ENCODE measurements at regions of chr17 and their contacts with region 1.

Region 1: DNA sequence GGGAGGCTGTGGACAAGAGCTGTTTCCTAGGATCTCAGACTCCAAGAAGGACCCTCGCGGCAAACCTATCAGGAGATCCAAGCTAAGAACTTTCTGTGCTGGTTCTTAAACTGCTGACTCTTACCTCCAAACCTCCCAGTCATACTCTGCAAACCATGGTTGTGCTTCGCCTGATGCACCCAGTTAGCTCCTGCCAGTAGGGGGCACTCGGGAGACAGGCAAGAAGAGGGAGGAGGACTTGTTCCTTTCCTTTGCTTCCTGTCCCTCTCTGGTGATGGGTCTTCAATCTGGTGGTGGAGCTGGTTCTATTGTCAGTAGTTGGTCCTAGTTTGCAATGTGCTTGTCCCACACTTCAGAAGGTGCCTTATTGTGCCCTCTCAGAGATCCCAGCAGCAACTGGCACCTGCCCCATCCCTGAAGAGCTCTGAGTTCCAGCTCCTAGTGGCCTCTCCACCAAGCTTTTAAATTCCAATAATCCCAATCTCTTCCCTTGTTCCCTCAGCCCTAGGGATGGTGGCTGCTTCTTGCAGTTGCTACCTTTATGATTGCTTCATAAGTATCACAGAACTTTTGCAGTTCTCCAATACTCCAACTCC is 113.5 kb upstream of the RPL38 start:
- DNase-seq: peak; percentile 61 to 93
- H3K4me3 ChIP-seq: no peak overlapping the region
- H3K27ac ChIP-seq: no peak overlapping the region
- H3K4me1 ChIP-seq: no peaks in the 10 kb centered on the region
- H3K27me3 ChIP-seq: no peaks in the 10 kb centered on the region
- CTCF ChIP-seq: peak; percentile 91 to 99 (median 97)
- EP300 ChIP-seq: no peak
- POLR2A ChIP-seq: no peak
- RAD21 ChIP-seq: peak; percentile 87 to 93

Region 2: DNA sequence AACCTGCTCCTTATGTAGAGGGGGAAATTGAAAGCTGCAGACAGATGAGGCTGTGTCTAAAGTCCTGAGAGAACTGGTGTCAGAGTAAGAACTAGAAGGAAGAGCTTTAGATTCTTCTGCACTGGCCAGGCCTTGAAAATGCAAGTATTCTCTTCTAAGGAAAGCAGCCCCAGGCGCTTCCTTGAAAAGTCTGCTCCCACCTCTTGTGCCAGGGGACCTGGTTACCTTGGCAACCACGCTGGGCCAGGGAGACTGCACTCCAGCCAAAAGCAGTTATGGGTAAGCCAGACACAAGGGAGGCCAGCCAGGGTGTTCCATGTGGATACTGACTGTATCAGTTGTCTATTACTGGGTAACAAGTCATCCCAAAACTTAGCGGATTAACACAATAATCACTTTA is 217.2 kb before region 1 on chr17:
- CTCF ChIA-PET with region 1: no interaction called
- POLR2A ChIA-PET with region 1: no interaction called
- DNase-seq: no peak
- H3K4me3 ChIP-seq: no peak overlapping the region
- H3K27ac ChIP-seq: no peak overlapping the region
- H3K4me1 ChIP-seq: peaks cover 0 to 2% (median 0%) of the 10 kb centered on the region in 4 experiments; a peak in 2 of 7 replicates
- H3K27me3 ChIP-seq: no peaks in the 10 kb centered on the region; a peak in 1 of 7 replicates
- CTCF ChIP-seq: no peak
- EP300 ChIP-seq: no peak
- POLR2A ChIP-seq: no peak
- RAD21 ChIP-seq: no peak

Region 3: GRCh38 chr17:74008196-74008595 is 81.8 kb before region 1 on chr17:
- CTCF ChIA-PET with region 1: interaction called, 33 read pairs
- POLR2A ChIA-PET with region 1: no interaction called
- DNase-seq: peak; percentile 21 to 63
- H3K4me3 ChIP-seq: no peak overlapping the region
- H3K27ac ChIP-seq: no peak overlapping the region
- H3K4me1 ChIP-seq: peaks cover 0 to 9% (median 5%) of the 10 kb centered on the region in 4 experiments; a peak in 6 of 7 replicates
- H3K27me3 ChIP-seq: no peaks in the 10 kb centered on the region
- CTCF ChIP-seq: peak; percentile 55 to 86 (median 74)
- EP300 ChIP-seq: no peak
- POLR2A ChIP-seq: no peak
- RAD21 ChIP-seq: peak; percentile 47 to 59

Region 4: DNA sequence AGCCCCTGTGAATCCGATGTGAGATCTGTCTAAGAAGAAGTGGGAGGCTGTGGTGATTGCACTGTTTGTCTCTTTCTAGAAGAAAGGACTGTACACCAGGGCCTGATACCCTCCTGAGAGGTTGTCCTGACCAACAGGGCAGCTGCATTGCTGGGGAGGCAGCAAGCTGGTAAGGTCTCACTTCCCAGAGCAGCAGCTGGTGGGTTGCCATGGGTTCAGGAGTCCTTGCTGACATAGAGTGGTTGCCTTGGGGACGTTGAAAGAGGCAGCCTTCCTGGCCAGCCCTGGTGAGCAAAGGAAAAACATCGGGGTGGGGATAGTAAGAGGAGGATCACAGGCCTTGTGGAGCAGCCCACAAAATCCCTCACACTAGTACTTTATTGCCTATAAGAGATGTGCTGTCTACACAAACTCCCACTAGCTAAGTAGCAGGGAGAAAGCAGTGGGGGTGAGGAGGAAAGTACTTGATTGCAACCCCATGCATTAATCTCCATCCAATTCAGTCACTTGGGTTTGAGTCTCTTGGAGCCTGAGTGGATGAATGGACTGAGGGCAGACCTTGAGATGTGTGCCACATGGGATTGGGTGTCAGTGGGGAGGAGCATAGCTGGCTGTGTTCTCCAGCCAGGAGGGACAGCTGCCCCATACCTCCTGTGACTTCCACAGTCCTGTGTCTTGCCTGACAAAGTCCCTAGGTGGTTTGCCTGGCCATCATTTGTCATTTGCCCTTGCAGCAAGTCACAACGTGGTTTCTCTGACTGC is 30.3 kb before region 1 on chr17:
- CTCF ChIA-PET with region 1: interaction called, 55 read pairs
- POLR2A ChIA-PET with region 1: interaction called, 4 read pairs
- DNase-seq: no peak
- H3K4me3 ChIP-seq: no peak overlapping the region
- H3K27ac ChIP-seq: no peak overlapping the region
- H3K4me1 ChIP-seq: peaks cover 0 to 15% (median 2%) of the 10 kb centered on the region in 4 experiments; a peak in 5 of 7 replicates
- H3K27me3 ChIP-seq: no peaks in the 10 kb centered on the region; a peak in 3 of 7 replicates
- CTCF ChIP-seq: no peak
- EP300 ChIP-seq: no peak
- POLR2A ChIP-seq: no peak
- RAD21 ChIP-seq: no peak

Region 5: DNA sequence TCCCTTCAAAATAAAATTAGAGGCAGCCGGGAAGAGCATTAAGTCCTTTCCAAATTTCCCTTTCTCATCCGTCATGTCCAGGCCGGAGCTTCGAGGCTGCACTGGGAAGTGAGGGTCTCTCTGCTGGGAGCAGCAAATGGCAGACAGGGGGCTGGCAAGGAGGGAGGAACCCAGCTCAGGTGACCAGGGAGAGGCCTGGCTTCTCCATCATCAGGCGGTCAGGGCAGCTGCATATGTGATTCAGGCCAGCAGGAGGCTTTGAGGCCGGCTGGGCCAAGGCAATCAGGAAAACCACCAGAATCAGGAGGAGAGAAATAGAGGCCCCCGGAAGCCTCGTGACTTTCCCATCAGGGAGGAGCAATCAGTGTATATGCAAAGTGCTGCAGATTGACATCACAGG is 28.5 kb after region 1 on chr17:
- CTCF ChIA-PET with region 1: interaction called, 58 read pairs
- POLR2A ChIA-PET with region 1: interaction called, 3 read pairs
- DNase-seq: peak; percentile 54 to 74
- H3K4me3 ChIP-seq: no peak overlapping the region
- H3K27ac ChIP-seq: no peak overlapping the region
- H3K4me1 ChIP-seq: peaks cover 17 to 36% (median 29%) of the 10 kb centered on the region in 4 experiments
- H3K27me3 ChIP-seq: no peaks in the 10 kb centered on the region; a peak in 1 of 7 replicates
- CTCF ChIP-seq: peak; percentile 52 to 71 (median 66)
- EP300 ChIP-seq: no peak
- POLR2A ChIP-seq: no peak
- RAD21 ChIP-seq: peak; percentile 27 to 59; a peak in 3 of 4 replicates

Region 6: GRCh38 chr17:74158761-74159160 is 68.8 kb after region 1 on chr17:
- CTCF ChIA-PET with region 1: interaction called, 17 read pairs
- POLR2A ChIA-PET with region 1: no interaction called
- DNase-seq: no peak
- H3K4me3 ChIP-seq: no peak overlapping the region
- H3K27ac ChIP-seq: no peak overlapping the region
- H3K4me1 ChIP-seq: no peaks in the 10 kb centered on the region; a peak in 3 of 7 replicates
- H3K27me3 ChIP-seq: no peaks in the 10 kb centered on the region
- CTCF ChIP-seq: no peak
- EP300 ChIP-seq: no peak
- POLR2A ChIP-seq: no peak
- RAD21 ChIP-seq: no peak

Region 7: DNA sequence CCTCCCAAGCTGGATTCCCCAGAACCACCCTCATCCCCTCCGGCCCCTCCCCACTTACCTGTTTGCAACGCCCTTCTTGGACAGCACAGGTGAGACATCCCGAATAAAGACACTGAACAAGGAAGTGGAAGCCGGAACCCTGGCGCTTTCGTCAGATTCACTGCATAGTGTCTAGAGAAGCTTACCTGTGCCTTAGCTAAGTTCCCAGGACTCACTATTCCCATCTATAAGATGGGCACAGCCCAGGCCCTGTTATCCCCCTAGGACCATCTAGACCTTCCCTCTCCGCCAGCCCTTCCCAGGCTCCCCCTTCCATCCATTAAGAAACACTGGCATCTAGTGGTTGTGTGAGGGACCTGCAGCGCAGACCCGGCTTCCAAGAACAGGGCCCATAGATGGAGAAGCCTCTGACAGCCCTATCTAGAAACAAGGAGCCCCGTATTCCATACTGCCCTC is 86.6 kb after region 1 on chr17:
- CTCF ChIA-PET with region 1: interaction called, 94 read pairs
- POLR2A ChIA-PET with region 1: no interaction called
- DNase-seq: peak; percentile 50 to 85
- H3K4me3 ChIP-seq: no peak overlapping the region
- H3K27ac ChIP-seq: no peak overlapping the region
- H3K4me1 ChIP-seq: 0 out of 7 replicates have a peak, but pooled peaks cover 0 to 4% (median 0%) of the 10 kb centered on the region in 4 experiments
- H3K27me3 ChIP-seq: 0 out of 7 replicates have a peak, but pooled peaks cover 0 to 1% (median 0%) of the 10 kb centered on the region in 4 experiments
- CTCF ChIP-seq: peak; percentile 86 to 97 (median 95)
- EP300 ChIP-seq: no peak
- POLR2A ChIP-seq: no peak
- RAD21 ChIP-seq: peak; percentile 99 to 100

Region 8: GRCh38 chr17:74203439-74204240 is 113.7 kb after region 1 on chr17 and contains the start of gene RPL38:
- CTCF ChIA-PET with region 1: interaction called, 27 read pairs
- POLR2A ChIA-PET with region 1: interaction called, 13 read pairs
- DNase-seq: peak; percentile 95 to 100
- H3K4me3 ChIP-seq: peak within 1 kb of the TSS; percentile 70 to 99 (median 96)
- H3K27ac ChIP-seq: peak within 1 kb of the TSS; percentile 92
- H3K4me1 ChIP-seq: peaks cover 7 to 24% (median 11%) of the 10 kb centered on the region in 4 experiments
- H3K27me3 ChIP-seq: peaks cover 0 to 13% (median 8%) of the 10 kb centered on the region in 4 experiments; a peak in 4 of 7 replicates
- CTCF ChIP-seq: peak; percentile 79 to 99 (median 98)
- EP300 ChIP-seq: peak in 1 of 2 experiments; percentile 87; a peak in 1 of 3 replicates
- POLR2A ChIP-seq: peak in 1 of 2 experiments; percentile 98; a peak in 2 of 3 replicates
- RAD21 ChIP-seq: peak in 1 of 2 experiments; percentile 18; a peak in 2 of 4 replicates
- total RNA-seq, gene RPL38: 1,195 and 1,222 TPM in 2 replicates